PC-9 (cell line): ENCODE measurements at regions of chr12 and their contacts with region 1.

Region 1: GRCh38 chr12:45939759-45940158 is 50.6 kb downstream of the SCAF11 start:
- DNase-seq: no peak
- H3K4me3 ChIP-seq: no peak overlapping the region
- H3K27ac ChIP-seq: no peak overlapping the region
- H3K4me1 ChIP-seq: no peaks in the 10 kb centered on the region
- H3K27me3 ChIP-seq: no peaks in the 10 kb centered on the region
- CTCF ChIP-seq: no peak

Region 2: GRCh38 chr12:45637706-45638105 is 302.1 kb before region 1 on chr12:
- CTCF ChIA-PET with region 1: no interaction called
- POLR2A ChIA-PET with region 1: interaction called, 10 read pairs
- intact Hi-C with region 1: no loop called
- DNase-seq: peak in 1 of 2 experiments; percentile 85
- H3K4me3 ChIP-seq: no peak overlapping the region
- H3K27ac ChIP-seq: no peak overlapping the region
- H3K4me1 ChIP-seq: peaks cover 8% of the 10 kb centered on the region; the same call in 1 of the 2 replicates
- H3K27me3 ChIP-seq: no peaks in the 10 kb centered on the region
- CTCF ChIP-seq: no peak

Region 3: DNA sequence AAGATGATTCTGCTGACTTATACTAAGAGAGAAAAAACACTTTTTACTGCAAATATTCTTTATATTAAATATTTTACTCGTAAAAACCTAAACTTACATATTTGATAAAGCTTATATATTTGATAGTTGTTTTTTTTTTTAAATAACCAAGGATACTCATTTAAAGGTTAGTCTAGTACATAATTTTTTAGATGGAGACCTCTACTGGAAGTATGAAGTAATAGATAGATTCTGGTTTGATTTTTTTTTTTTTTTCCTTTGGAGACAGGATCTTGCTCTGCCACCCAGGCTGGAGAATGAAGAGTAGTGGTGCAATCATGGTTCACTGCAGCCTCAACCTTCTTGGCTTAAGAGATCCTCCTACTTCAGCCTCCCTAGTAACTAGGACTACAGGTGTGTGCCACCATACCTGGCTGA is 193.9 kb before region 1 on chr12:
- CTCF ChIA-PET with region 1: no interaction called
- POLR2A ChIA-PET with region 1: no interaction called
- intact Hi-C with region 1: no loop called
- DNase-seq: peak in 1 of 2 experiments; percentile 42
- H3K4me3 ChIP-seq: no peak overlapping the region
- H3K27ac ChIP-seq: no peak overlapping the region
- H3K4me1 ChIP-seq: peaks cover 14% of the 10 kb centered on the region; the same call in 1 of the 2 replicates
- H3K27me3 ChIP-seq: no peaks in the 10 kb centered on the region
- CTCF ChIP-seq: peak; percentile 58